Dendritic cell treated with granulocyte-macrophage colony-stimulating factor and Interleukin-4, amounts not matched to agents 40 ng/mL and 50 ng/mL, for 4 days (primary cell): ENCODE measurements at regions of chr12 and their contacts with region 1.

Region 1: DNA sequence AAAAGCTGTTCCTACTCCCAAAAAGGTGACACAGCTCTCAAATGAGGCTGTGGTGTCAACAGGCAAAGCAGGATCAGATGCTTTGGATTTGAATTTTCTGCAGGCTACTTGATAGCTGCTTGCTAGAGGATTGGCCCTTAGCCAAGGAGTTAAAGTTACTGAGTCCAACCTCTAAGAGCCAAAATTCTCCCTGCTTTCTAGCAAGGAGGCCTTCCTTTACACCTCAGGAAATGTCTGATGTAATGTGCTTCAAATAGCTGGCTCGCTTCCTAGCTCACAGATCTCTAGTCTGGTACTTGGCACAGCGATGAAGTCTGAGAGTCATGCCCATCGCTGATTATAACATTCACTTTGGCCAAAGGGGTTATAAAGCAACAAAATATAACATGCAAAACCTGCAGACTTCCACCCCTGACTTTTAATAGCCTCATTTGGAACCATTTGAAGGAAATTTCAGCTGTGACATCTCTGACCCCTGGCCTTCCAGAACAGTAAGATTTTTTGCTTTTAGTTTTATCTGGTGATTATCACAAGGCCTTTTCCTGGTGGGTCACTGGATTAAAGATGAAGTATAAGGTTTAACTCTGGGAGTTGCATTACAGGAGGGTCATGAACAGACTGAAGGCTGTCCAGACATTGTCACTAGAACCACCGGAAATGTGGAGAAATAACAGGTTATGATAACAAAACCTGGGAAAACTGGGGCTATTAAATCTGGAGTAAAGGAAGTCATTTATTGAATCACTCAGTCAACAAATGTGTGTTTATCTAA is 189.7 kb downstream of the EPS8 start:
- H3K4me3 Mint-ChIP-seq: no peak overlapping the region
- H3K27ac Mint-ChIP-seq: no peak overlapping the region
- H3K4me1 Mint-ChIP-seq: peaks cover 56% of the 10 kb centered on the region
- H3K27me3 Mint-ChIP-seq: no peaks in the 10 kb centered on the region

Region 2: DNA sequence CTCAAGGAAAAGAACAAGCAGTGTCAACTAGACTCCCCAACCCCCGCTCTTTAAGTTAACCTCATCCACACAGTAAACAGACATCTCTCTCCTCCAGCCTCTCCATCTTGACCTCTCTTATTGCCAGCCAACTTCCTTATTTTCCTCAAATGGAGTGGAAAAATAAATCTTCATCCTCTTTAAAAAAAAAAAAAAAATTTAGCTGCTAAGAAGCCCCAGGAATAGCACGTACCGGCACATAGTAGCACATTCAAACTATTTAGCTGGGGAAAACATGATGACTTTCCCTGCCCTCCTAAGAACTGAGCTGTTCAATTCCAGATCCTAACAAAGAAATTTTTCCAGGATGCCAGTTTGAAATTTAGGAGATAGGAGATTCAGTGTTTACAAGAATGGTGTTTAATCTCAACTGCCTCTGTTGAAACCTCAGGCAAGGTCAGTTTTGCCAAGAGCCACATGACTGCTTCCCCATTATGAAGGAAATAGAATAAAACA is 99.0 kb after region 1 on chr12:
- intact Hi-C with region 1: loop called (anchors 10 kb)
- H3K4me3 Mint-ChIP-seq: no peak overlapping the region
- H3K27ac Mint-ChIP-seq: peak overlapping the region; percentile 72
- H3K4me1 Mint-ChIP-seq: peaks cover 39% of the 10 kb centered on the region
- H3K27me3 Mint-ChIP-seq: no peaks in the 10 kb centered on the region

Region 3: GRCh38 chr12:15789220-15790171 is 190.0 kb after region 1 on chr12 and contains the start of gene EPS8:
- intact Hi-C with region 1: loop called (anchors 5 kb)
- H3K4me3 Mint-ChIP-seq: peak within 1 kb of the TSS; percentile 75
- H3K27ac Mint-ChIP-seq: peak within 1 kb of the TSS; percentile 56
- H3K4me1 Mint-ChIP-seq: peaks cover 16% of the 10 kb centered on the region
- H3K27me3 Mint-ChIP-seq: peaks cover 47% of the 10 kb centered on the region